Natural killer cell (primary cell): ENCODE measurements at regions of chr18 and their contacts with region 1.

Region 1: GRCh38 chr18:72762515-72763122 is 105.2 kb downstream of the NETO1 start:
- DNase-seq: peak in 1 of 2 donors; percentile 41
- ATAC-seq: no peak
- H3K4me3 ChIP-seq: no peak overlapping the region
- H3K4me3 Mint-ChIP-seq: no peak overlapping the region
- H3K27ac ChIP-seq: no peak overlapping the region
- H3K27ac Mint-ChIP-seq: no peak overlapping the region
- H3K4me1 ChIP-seq: no peaks in the 10 kb centered on the region
- H3K4me1 Mint-ChIP-seq: no peaks in the 10 kb centered on the region
- H3K27me3 ChIP-seq: no peaks in the 10 kb centered on the region
- H3K27me3 Mint-ChIP-seq: no peaks in the 10 kb centered on the region
- CTCF ChIP-seq: no peak

Region 2: DNA sequence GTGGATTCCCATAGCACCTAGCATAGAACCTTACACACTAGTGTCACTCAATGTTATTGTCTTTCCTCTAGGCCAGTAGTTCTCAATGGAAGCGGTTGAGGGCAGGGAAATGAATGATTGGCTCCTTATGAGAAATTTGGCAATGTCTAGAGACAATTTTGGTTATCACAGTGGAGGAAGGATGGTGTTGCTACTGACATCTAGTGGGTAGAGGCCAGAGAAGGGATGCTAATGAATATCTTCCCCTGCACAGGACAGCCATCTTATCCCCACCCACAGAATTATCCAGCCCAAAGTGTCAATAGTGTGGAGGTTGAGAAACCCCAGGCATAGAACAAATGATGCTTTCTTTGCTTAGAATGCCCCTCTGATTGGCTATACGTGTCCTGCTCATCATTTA is 1568.8 kb after region 1 on chr18:
- intact Hi-C with region 1: loop called (anchors 10 kb)
- DNase-seq: no peak
- ATAC-seq: peak in 1 of 3 donors; percentile 39
- H3K4me3 ChIP-seq: no peak overlapping the region
- H3K4me3 Mint-ChIP-seq: no peak overlapping the region
- H3K27ac ChIP-seq: no peak overlapping the region
- H3K27ac Mint-ChIP-seq: no peak overlapping the region
- H3K4me1 ChIP-seq: no peaks in the 10 kb centered on the region
- H3K4me1 Mint-ChIP-seq: no peaks in the 10 kb centered on the region
- H3K27me3 ChIP-seq: no peaks in the 10 kb centered on the region
- H3K27me3 Mint-ChIP-seq: peaks cover 7% of the 10 kb centered on the region in 2 donors
- CTCF ChIP-seq: no peak